Activated T-helper 1 cell treated with anti-CD3 and anti-CD28 coated beads, Interleukin-12 subunit alpha, Interleukin-12 subunit beta, Interleukin-2, Interleukin-4 antibody, amounts not matched to agents 30 ng/mL and 10 ng/mL and 1 ng/mL, durations not matched to agents 14 hours and 24 hours and 36 hours (primary cell): ENCODE measurements at regions of chr7 and their contacts with region 1.

Region 1: DNA sequence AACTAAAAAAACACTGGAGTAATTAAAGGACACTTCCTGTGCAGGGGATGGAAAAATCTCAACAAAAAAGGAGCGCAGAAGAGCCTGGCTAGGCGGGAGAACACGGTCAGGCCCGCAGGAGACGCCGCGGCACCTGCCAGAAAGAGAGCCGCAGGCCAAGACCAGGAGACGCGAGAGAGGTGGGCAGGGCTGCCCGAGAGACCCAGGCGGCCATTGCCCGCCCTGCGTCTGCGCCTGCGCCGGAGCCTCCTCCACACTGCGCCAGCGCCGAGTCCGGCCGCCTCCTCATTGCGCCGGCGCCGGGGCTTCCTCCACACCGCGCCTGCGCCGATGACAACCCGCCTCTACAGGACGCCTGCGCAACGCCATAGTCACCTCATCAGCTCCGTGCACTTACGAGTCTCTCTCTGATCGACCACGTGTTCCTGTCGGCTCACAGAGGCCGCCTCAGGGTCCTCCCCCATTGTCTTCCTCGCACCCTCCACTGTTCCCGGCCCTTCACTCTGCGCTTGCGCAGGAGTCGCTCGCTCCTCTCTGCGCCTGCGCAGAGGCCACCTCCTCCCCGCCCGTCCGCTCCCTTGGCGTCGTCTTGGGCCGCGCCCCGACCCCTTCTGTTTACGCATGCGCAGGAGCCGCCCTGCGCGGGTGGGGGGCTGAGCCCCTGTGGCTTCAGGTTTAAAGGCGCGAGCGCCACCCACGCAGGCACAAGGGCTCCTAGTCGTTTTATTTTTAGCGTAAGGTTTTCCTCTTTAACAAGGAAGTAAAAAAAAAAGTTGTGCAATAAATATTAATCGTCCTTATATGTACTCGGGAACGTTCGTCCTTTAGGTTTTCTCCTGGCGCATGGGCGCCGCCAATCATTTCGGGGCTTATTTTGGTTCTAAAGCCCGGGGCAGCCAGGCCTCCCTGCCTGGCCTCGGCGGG is 43.2 kb upstream of the FAM20C start:
- DNase-seq: peak; percentile 98
- H3K4me3 Mint-ChIP-seq: peak overlapping the region; percentile 85
- H3K27ac Mint-ChIP-seq: peak overlapping the region; percentile 98
- H3K4me1 Mint-ChIP-seq: peaks cover 22% of the 10 kb centered on the region
- H3K27me3 Mint-ChIP-seq: peaks cover 5% of the 10 kb centered on the region

Region 2: DNA sequence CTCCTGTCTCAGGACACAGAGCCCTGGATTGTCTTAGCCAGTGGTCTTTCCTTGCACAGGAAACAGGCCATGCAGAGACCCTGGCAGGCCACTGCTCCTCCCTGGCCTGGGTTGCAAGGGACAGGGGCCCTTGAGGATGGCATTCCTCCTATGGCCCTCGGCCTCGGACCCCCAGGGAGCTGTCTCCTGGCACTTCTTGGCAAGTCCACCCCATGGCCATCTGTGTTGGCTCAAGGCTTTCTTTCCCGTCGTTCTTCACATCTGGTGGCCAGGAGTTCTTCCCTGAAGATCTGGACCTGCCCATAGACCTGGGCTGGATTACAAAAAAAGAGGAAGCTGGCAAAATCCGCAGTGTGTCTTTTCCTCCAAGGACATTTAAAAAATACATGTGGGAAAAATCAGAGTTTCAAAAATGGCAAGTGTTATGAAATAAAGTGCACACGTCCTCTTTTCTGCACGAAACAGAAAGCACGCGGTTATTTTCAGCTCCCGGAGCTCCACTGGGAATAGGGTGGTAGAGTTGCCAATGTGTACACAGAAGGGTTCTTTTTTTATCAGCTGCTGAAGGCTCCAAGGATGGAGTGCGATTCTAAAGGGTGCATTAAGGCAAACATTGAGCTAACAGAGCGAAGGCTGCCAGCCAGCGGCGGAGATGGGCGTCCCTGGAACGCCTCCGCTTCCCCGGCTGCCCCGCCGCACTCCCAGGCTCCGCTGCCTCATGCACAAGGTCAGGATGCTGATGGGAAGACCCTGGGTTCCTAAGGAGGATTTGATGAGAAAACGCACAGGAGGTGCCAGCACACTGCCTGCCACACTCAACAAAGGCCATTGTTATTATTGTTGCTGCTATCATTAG is 19.6 kb before region 1 on chr7:
- intact Hi-C with region 1: no loop called
- DNase-seq: no peak
- H3K4me3 Mint-ChIP-seq: no peak overlapping the region
- H3K27ac Mint-ChIP-seq: no peak overlapping the region
- H3K4me1 Mint-ChIP-seq: no peaks in the 10 kb centered on the region
- H3K27me3 Mint-ChIP-seq: no peaks in the 10 kb centered on the region

Region 3: GRCh38 chr7:1028031-1028770 is 879.0 kb after region 1 on chr7:
- intact Hi-C with region 1: loop called (anchors 2 kb)
- DNase-seq: peak; percentile 82
- H3K4me3 Mint-ChIP-seq: peak overlapping the region; percentile 82
- H3K27ac Mint-ChIP-seq: peak overlapping the region; percentile 91
- H3K4me1 Mint-ChIP-seq: peaks cover 17% of the 10 kb centered on the region
- H3K27me3 Mint-ChIP-seq: no peaks in the 10 kb centered on the region

Region 4: GRCh38 chr7:1169409-1170368 is 1020.5 kb after region 1 on chr7:
- intact Hi-C with region 1: loop called (anchors 5 kb)
- DNase-seq: peak; percentile 85
- H3K4me3 Mint-ChIP-seq: peak overlapping the region; percentile 82
- H3K27ac Mint-ChIP-seq: peak overlapping the region; percentile 79
- H3K4me1 Mint-ChIP-seq: peaks cover 16% of the 10 kb centered on the region
- H3K27me3 Mint-ChIP-seq: no peaks in the 10 kb centered on the region